AG04450 (cell line): ENCODE measurements at regions of chr12 and their contacts with region 1.

Region 1: GRCh38 chr12:86914716-86915115 is 658.5 kb upstream of the MGAT4C start:
- DNase-seq: peak; percentile 24
- H3K4me3 ChIP-seq: no peak overlapping the region
- H3K27ac ChIP-seq: no peak overlapping the region
- H3K27me3 ChIP-seq: no peaks in the 10 kb centered on the region
- CTCF ChIP-seq: peak; percentile 87

Region 2: DNA sequence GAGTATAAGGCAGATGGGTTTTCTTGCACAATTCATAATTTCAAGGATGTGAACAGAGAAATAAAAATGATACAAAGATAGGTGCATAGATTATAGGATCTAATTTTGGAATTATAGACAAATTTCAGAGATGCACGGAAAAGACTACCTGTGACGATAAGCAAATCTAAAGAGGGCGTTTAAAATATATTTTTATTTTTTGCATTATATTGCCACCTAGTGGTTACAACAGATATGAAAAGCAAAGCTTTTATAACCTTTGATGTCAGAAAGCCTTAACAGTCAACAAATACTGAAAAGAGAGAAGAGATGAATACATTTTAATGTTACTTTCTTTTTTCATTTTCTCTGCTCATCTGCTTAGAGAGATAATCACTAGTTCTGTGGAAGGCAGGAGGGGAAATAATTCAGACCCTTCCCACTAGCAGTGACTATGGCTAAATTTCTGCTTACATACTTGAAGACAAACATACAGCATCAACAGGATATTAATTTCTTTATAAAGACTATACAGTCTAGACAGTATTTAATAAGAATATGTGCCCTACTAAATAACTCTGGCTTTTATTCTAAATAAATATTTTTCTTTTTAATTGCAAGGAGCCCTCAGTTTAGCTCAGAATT is 994.3 kb before region 1 on chr12:
- CTCF ChIA-PET with region 1: interaction called, 33 read pairs
- POLR2A ChIA-PET with region 1: no interaction called
- DNase-seq: no peak
- H3K4me3 ChIP-seq: no peak overlapping the region
- H3K27ac ChIP-seq: no peak overlapping the region
- H3K27me3 ChIP-seq: no peaks in the 10 kb centered on the region
- CTCF ChIP-seq: peak; percentile 62

Region 3: DNA sequence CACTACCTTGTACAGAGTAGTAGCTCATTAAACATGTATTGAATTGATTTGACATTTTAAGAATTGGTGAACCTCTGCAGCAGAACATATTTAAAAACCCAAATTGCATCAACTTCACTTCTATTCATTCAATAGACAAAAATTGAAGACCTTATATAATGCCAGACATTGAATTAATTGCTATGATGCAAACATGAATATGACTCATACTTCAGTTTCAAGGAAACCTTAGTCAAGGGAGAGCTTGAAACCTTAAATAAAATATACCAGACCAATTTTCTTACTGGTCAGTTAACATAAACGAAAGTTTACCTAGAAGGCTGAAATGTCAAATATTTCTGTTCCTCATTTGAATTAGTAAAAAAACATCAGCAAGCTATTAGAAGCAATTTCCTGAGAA is 653.6 kb before region 1 on chr12:
- CTCF ChIA-PET with region 1: interaction called, 16 read pairs
- POLR2A ChIA-PET with region 1: no interaction called
- DNase-seq: no peak
- H3K4me3 ChIP-seq: no peak overlapping the region
- H3K27ac ChIP-seq: no peak overlapping the region
- H3K27me3 ChIP-seq: no peaks in the 10 kb centered on the region
- CTCF ChIP-seq: no peak

Region 4: GRCh38 chr12:86376052-86376451 is 538.7 kb before region 1 on chr12:
- CTCF ChIA-PET with region 1: interaction called, 11 read pairs
- POLR2A ChIA-PET with region 1: no interaction called
- DNase-seq: no peak
- H3K4me3 ChIP-seq: no peak overlapping the region
- H3K27ac ChIP-seq: no peak overlapping the region
- H3K27me3 ChIP-seq: no peaks in the 10 kb centered on the region
- CTCF ChIP-seq: 0 out of 2 replicates have a peak, but pooled peaks have one; percentile 8

Region 5: DNA sequence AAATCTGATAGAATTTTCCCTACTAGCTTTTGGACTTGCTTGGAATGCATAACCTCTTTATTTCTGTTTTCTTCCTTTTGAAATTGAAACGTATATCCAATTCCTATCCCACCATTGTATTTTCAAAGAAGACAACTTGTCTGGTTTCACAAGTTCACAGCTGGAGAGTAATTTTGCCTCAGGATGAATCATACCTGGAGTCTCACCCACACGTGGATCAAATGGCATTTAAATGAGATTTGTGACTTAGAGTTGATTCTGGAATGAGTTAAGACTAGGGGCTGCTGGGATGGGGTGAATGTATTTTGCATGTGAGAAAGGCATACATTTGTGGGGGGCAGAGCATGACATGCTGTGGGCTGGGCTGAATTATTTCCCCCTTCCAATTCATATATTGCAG is 142.0 kb before region 1 on chr12:
- CTCF ChIA-PET with region 1: no interaction called
- POLR2A ChIA-PET with region 1: no interaction called
- DNase-seq: no peak
- H3K4me3 ChIP-seq: no peak overlapping the region
- H3K27ac ChIP-seq: no peak overlapping the region
- H3K27me3 ChIP-seq: no peaks in the 10 kb centered on the region
- CTCF ChIP-seq: no peak

Region 6: GRCh38 chr12:86903159-86903558 is 11.6 kb before region 1 on chr12:
- CTCF ChIA-PET with region 1: interaction called, 20 read pairs
- POLR2A ChIA-PET with region 1: no interaction called
- DNase-seq: no peak
- H3K4me3 ChIP-seq: no peak overlapping the region
- H3K27ac ChIP-seq: no peak overlapping the region
- H3K27me3 ChIP-seq: no peaks in the 10 kb centered on the region
- CTCF ChIP-seq: no peak

Region 7: DNA sequence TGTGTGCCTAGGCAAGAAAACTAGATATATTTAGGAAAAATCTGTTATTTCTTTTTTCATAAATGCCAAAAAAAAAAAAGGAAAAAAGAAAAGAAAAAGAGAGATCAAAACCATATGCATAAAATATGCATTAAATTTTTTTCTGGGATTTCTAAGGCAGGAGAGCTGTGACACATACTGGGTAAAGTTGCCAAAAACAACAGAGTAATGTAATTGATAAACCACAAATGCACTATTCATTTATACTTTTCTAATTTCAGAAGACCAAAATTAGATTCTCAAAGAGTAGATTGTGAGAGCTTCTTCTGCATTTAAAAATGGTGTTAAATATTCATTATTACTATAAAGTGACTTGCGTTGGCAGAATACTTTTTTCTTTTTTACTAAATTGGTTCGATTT is 15.2 kb after region 1 on chr12:
- CTCF ChIA-PET with region 1: interaction called, 17 read pairs
- POLR2A ChIA-PET with region 1: no interaction called
- DNase-seq: no peak
- H3K4me3 ChIP-seq: no peak overlapping the region
- H3K27ac ChIP-seq: no peak overlapping the region
- H3K27me3 ChIP-seq: no peaks in the 10 kb centered on the region
- CTCF ChIP-seq: no peak

Region 8: GRCh38 chr12:87848248-87848868 is 933.6 kb after region 1 on chr12:
- CTCF ChIA-PET with region 1: interaction called, 15 read pairs
- POLR2A ChIA-PET with region 1: no interaction called
- DNase-seq: peak; percentile 58
- H3K4me3 ChIP-seq: no peak overlapping the region
- H3K27ac ChIP-seq: no peak overlapping the region
- H3K27me3 ChIP-seq: no peaks in the 10 kb centered on the region
- CTCF ChIP-seq: peak; percentile 79